HEK293T (cell line): ENCODE measurements at regions of chr6 and their contacts with region 1.

Region 1: DNA sequence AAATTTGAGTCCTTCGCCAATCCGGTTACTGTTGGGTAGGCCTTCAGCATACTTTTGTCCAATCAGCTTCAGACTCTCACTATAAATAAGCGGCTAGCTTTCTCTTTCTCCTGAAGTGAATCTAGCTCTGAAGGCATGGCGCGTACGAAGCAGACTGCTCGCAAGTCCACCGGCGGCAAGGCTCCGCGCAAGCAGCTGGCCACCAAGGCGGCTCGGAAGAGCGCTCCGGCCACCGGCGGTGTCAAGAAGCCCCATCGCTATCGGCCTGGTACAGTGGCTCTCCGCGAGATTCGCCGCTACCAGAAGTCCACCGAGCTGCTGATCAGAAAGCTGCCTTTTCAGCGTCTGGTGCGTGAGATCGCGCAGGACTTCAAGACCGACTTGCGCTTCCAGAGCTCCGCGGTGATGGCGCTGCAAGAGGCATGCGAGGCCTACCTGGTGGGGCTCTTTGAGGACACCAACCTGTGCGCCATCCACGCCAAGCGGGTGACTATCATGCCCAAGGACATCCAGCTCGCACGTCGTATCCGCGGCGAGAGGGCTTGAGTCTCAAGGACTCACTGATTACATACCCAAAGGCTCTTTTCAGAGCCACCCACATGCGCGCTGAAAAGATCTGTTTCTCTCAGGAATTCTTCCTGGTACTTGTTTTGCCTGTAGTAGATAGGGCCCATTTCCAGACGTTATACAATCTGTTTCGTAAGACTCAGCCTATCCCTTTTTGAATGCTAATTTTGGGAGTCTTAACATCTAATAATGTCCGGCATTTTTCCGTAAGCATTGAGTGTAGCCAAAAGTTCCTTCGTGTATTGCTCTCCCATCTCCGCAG is 102.0 kb downstream of the OR2B2 start:
- DNase-seq: peak; percentile 76

Region 2: GRCh38 chr6:27132532-27133280 is 677.4 kb before region 1 on chr6:
- CTCF ChIA-PET with region 1: no interaction called
- POLR2A ChIA-PET with region 1: interaction called, 38 read pairs
- DNase-seq: peak; percentile 85

Region 3: DNA sequence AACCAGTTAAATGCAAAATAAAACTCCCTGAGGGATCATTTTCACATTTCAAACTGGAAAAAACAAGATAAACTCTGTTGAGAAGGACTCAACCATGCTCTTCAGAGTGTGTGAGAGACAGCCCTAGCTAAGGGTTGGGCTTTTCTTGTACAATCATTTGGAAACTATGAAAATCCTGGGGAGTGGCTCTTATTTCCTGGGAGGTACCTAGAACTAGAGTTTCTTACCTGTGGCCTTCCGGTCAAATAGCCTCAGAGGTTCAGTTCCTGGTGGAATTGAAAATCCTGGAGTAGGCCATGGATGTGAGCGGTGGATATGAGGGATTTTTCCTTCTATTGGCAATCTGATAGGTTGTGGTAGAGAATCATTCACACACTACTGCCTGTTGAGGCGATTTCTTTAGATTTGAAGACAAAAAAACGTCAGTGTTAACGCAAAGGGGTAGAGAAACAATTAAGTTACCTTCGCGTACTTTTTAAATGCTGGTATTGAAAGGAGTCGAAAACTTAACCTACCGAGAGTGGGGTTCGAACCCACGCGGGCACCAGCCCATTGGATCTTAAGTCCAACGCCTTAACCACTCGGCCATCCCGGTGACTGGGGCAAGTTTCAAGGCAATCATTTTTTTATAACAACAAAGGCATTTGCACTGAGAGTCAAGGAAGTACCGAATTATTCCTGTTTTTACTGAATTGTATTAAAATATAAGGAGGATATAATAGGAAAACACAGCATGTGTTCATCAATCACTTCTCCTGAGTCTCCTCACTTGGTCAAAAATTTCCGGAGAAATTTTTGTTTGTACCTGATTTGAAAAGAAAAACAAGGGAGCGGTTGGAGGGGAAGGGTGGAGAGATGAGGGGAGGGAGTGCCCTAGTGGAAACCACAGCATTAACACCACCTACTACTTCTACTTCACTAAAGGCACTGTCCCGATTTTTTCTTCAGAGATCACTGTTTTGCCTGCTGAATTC is 89.3 kb before region 1 on chr6:
- CTCF ChIA-PET with region 1: no interaction called
- POLR2A ChIA-PET with region 1: no interaction called
- DNase-seq: peak; percentile 40

Region 4: DNA sequence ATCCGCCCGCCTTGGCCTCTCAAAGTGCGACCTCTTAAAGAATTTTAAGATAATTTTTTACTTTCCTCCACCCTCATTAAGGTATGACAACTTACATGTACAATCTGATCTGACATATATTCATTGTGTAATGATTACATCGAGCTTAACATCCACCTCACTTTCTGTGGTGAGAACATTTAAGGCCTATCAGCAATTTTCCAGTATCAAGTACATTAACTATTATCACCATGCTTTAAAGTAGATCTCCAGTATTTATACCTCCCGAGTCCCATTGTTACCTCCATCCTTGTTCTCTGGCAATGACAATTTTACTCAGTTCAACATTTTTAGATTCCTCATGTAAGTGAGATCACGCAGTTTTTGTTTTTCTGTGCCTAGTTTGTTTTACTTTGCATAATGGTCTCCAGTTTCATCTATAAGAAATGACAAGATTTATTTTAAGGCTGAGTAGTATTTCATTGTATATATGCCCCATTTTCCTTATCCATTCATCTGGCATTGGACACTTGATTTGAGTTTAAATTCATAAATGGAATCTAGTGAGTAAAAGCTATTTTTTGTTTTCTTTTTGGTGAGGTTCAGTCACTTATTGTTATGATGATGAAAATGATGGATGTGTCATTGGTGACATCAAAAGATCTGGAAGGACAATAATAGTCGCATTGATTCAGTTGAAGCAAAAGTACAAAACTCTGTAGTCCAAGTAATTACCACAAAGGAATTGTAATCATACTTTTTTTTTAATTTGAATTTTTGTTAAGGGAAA is 15.1 kb after region 1 on chr6:
- CTCF ChIA-PET with region 1: interaction called, 3 read pairs
- POLR2A ChIA-PET with region 1: interaction called, 149 read pairs
- DNase-seq: no peak

Region 5: DNA sequence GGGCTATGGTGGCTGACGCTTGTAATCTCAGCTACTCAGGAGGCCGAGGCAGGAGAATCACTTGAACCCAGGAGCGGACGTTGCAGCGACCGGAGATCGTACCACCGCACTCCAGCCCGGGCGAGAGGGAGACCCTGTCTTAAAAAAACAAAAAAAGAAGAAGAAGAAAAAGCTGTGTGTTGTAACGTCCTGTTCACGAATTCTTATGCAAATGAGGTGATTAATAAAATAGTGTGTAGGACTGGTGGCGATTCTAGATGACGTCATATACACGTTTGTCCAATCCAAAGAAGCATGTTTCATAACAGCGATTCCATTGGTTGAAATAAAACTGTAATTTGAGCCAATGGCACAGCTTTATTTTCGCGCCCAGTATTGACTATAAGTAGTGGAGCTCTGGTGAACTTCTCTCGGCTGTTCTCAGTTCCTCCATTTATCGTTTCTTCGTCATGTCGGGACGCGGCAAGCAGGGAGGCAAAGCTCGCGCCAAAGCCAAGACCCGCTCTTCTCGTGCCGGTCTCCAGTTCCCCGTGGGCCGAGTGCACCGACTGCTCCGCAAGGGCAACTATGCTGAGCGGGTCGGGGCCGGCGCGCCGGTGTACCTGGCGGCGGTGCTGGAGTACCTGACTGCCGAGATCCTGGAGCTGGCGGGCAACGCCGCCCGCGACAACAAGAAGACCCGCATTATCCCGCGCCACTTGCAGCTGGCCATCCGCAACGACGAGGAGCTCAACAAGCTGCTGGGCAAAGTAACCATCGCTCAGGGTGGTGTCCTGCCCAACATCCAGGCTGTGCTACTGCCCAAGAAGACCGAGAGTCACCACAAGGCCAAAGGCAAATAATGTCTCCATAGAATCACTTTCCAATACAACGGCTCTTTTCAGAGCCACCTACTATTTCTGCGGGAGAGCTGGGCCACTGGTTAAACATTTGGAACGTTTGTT is 55.0 kb after region 1 on chr6:
- CTCF ChIA-PET with region 1: no interaction called
- POLR2A ChIA-PET with region 1: interaction called, 33 read pairs
- DNase-seq: peak; percentile 80